Endothelial cell of umbilical vein (primary cell): ENCODE measurements at regions of chr11 and their contacts with region 1.

Region 1: GRCh38 chr11:111514216-111515031 is at the start of gene HOATZ:
- DNase-seq: no peak
- H3K4me3 ChIP-seq: no peak within 1 kb of the TSS
- H3K27ac ChIP-seq: no peak within 1 kb of the TSS
- H3K4me1 ChIP-seq: peaks cover 4% of the 10 kb centered on the region
- H3K27me3 ChIP-seq: peaks cover 21 to 39% of the 10 kb centered on the region in 2 experiments
- CTCF ChIP-seq: no peak
- POLR2A ChIP-seq: no peak
- total RNA-seq, gene HOATZ: not detected in 2 replicates

Region 2: DNA sequence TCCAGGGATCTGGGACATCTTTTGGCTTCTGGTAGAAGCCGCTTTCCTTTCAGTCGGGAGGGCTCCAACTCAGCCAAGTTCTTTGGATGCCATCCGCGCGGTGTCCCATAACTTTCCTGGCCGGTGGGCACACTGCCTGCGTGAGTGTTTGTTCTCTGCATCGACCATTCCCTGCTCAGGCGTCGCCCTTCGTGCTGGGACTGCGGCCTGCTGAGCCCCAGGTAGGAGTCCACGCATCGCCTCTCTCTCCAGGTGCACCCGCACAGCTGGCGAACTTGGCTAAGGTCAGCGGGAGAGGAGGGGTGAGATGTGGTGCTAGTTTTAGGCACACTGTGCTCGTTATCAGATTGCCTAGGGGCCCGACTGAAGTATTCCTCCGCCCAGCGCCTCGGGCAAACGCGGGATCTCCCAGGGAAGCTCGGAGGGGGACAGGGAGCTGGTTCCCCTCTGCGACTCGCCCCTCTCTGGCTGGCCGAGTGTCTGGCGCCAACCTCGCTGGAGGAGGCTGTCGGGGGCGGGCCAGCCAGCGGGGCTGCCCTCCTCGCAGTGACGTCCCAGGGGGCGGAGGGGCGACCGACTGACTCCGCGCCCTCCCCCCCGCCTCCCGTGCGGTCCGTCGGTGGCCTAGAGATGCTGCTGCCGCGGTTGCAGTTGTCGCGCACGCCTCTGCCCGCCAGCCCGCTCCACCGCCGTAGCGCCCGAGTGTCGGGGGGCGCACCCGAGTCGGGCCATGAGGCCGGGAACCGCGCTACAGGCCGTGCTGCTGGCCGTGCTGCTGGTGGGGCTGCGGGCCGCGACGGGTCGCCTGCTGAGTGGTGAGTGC is 25.9 kb after region 1 on chr11 and contains the start of gene LAYN:
- CTCF ChIA-PET with region 1: interaction called, 5 read pairs
- POLR2A ChIA-PET with region 1: no interaction called
- dilution Hi-C with region 1: no loop called
- intact Hi-C with region 1: loop called (anchors 2 kb)
- DNase-seq: no peak
- H3K4me3 ChIP-seq: peak within 1 kb of the TSS; percentile 6 to 44 (median 38)
- H3K27ac ChIP-seq: no peak within 1 kb of the TSS
- H3K4me1 ChIP-seq: peaks cover 17% of the 10 kb centered on the region
- H3K27me3 ChIP-seq: peaks cover 47 to 60% of the 10 kb centered on the region in 2 experiments
- CTCF ChIP-seq: no peak
- POLR2A ChIP-seq: no peak
- total RNA-seq, gene LAYN: 2.2 and 2.3 TPM in 2 replicates